ENCODE measurements at regions of chr1 and their contacts with region 1.

Region 1: DNA sequence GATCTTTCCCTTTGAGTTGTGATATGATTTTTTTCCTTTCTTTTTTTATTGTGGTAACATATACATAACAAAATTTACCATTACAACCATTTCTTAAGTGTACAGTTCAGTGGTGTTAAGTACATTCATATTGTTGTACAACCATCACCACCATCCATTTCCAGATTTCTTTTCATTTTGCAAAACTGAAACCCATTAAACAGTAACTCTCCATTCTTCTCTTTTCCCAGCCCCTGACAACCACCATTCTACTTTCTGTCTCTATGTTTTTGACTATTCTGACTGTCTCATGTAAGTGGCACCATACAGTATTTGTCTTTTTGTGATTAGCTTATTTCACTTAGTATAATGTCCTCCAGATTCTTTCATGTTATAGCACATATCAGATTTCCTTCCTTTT is 30.3 kb downstream of the CEP350 start:
- DNase-seq: no peak
- H3K4me3 ChIP-seq: no peak overlapping the region
- H3K27ac ChIP-seq: no peak overlapping the region
- H3K4me1 ChIP-seq: no peaks in the 10 kb centered on the region
- H3K27me3 ChIP-seq: no peaks in the 10 kb centered on the region
- CTCF ChIP-seq: no peak

Region 2: GRCh38 chr1:179954493-179955297 is 30.2 kb before region 1 on chr1 and contains the start of gene CEP350:
- CTCF ChIA-PET with region 1: no interaction called
- dilution Hi-C with region 1: no loop called
- in situ Hi-C with region 1: no loop called
- intact Hi-C with region 1: no loop called
- DNase-seq: peak; percentile 99
- H3K4me3 ChIP-seq: peak within 1 kb of the TSS; percentile 94 to 99 (median 96)
- H3K27ac ChIP-seq: peak within 1 kb of the TSS; percentile 81
- H3K4me1 ChIP-seq: peaks cover 12% of the 10 kb centered on the region
- H3K27me3 ChIP-seq: no peaks in the 10 kb centered on the region
- CTCF ChIP-seq: no peak
- total RNA-seq, gene CEP350: 29.6 to 37.5 TPM

Region 3: DNA sequence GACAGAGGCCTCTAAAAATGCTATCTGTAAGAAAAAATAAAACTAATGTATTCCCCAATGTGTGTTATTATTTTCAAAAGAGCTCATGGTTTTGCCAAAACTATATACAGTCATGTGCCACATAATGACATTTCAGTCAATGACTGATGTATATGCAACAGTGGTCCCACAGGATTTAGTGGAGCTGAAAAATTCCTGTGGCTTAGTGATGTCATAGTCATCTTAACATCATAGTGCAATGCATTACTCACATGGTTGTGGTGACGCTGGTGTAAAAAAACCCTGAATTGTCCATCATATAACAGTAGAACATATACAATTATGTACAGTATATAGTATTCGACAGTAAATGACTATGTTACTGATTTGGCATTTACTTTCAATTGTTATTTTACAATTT is 1670.8 kb after region 1 on chr1:
- CTCF ChIA-PET with region 1: interaction called, 15 read pairs
- dilution Hi-C with region 1: no loop called
- in situ Hi-C with region 1: no loop called
- intact Hi-C with region 1: no loop called
- DNase-seq: peak; percentile 48
- H3K4me3 ChIP-seq: no peak overlapping the region
- H3K27ac ChIP-seq: no peak overlapping the region
- H3K4me1 ChIP-seq: peaks cover 6% of the 10 kb centered on the region
- H3K27me3 ChIP-seq: no peaks in the 10 kb centered on the region
- CTCF ChIP-seq: no peak

Measured in mammary epithelial cell (primary cell).